ENCODE measurements at regions of chr2 and their contacts with region 1.

Region 1: DNA sequence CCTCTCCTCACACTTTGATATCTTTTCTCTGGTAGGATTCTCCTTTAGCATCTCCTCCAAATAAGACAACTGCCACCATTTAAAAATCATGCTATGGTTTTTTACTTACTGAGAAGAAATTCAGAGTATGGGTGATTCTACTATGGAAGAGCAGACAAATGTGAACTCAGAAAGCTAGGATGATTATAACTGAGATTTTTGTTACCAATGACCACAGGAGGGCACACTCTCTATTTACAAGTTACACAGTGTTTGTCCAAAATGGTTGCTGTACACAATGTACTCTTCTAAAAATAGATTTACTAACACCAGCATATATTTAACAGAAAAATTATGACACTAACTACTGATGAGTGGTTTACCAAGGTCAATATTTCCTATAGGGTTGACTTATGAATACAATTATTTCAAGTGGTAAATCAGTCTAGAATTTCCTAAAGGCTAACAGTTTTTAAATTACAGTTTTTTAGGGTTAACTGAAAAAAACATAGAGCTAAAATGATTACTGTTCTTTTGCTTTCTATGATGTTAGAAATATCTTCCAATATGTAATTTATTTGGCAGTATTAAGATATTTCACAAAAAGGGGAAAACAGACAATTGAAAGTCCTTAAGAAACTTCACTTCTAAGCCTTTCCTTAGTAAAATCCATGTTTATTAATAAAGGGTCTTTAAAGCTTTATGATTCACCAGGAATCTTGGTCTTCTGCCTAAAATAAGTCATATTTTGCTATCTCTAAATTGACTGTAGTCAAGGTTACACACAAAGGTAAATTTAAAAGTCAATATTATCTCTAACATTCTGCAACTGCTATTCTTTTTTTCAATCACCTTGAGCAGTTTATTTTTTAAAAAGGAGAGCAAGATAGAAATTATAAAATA is 57.2 kb downstream of the MAP4K3 start:
- DNase-seq: peak; percentile 62
- H3K4me3 Mint-ChIP-seq: no peak overlapping the region
- H3K27ac Mint-ChIP-seq: peak overlapping the region; percentile 82
- H3K4me1 Mint-ChIP-seq: peaks cover 25% of the 10 kb centered on the region
- H3K27me3 Mint-ChIP-seq: no peaks in the 10 kb centered on the region
- CTCF ChIP-seq: peak; percentile 48

Region 2: DNA sequence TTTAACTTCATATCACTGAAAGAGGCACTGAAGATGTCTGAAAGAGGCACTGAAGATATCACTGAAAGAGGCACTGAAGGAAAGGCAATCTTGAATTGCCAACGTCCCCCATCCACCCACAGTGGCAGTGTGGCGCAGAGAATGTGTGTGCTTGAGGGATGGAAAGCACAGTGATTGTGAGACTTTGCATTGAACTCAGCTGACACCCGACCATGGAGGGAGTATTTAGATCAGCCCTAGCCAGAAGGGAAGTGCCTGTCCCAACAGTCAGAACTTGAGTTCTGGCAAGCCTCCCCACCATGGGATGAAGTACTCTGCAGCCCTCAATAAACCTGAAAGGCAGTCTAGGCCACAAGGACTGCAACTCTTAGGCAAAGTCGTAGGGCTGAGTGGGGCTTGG is 23.4 kb after region 1 on chr2:
- CTCF ChIA-PET with region 1: interaction called, 5 read pairs
- POLR2A ChIA-PET with region 1: interaction called, 10 read pairs
- intact Hi-C with region 1: no loop called
- DNase-seq: no peak
- H3K4me3 Mint-ChIP-seq: no peak overlapping the region
- H3K27ac Mint-ChIP-seq: peak overlapping the region; percentile 86
- H3K4me1 Mint-ChIP-seq: peaks cover 41% of the 10 kb centered on the region
- H3K27me3 Mint-ChIP-seq: no peaks in the 10 kb centered on the region
- CTCF ChIP-seq: no peak

Region 3: DNA sequence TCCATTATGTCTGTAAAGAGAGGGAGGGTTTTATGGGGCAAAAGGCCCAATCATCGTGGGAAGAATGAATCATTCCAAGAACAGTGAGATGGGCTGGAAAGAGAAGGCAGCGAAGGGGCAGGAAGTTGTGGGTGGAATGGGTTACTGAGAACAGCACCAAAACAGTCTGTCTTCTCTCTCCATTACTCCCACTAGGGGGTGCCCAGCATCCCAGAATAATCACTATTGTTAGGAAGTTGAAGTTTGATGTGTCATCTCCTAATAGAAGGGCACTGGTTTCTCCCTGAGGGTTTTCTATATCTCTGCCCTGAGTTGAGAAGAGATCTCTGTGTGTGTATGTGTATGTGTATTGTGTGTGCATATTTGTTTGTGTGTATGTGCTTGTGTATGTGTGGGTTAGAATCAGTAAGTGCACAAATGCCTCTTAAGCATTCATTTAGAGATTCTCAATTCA is 133.8 kb after region 1 on chr2:
- CTCF ChIA-PET with region 1: interaction called, 7 read pairs
- POLR2A ChIA-PET with region 1: interaction called, 3 read pairs
- intact Hi-C with region 1: loop called (anchors 1 kb)
- DNase-seq: peak; percentile 92
- H3K4me3 Mint-ChIP-seq: no peak overlapping the region
- H3K27ac Mint-ChIP-seq: peak overlapping the region; percentile 90
- H3K4me1 Mint-ChIP-seq: peaks cover 30% of the 10 kb centered on the region
- H3K27me3 Mint-ChIP-seq: no peaks in the 10 kb centered on the region
- CTCF ChIP-seq: peak; percentile 55

Region 4: GRCh38 chr2:39523308-39524044 is 143.6 kb after region 1 on chr2:
- CTCF ChIA-PET with region 1: interaction called, 8 read pairs
- POLR2A ChIA-PET with region 1: interaction called, 14 read pairs
- intact Hi-C with region 1: no loop called
- DNase-seq: peak; percentile 82
- H3K4me3 Mint-ChIP-seq: peak overlapping the region; percentile 59
- H3K27ac Mint-ChIP-seq: peak overlapping the region; percentile 96
- H3K4me1 Mint-ChIP-seq: peaks cover 49% of the 10 kb centered on the region
- H3K27me3 Mint-ChIP-seq: no peaks in the 10 kb centered on the region
- CTCF ChIP-seq: no peak

Region 5: GRCh38 chr2:39696838-39697237 is 317.0 kb after region 1 on chr2:
- CTCF ChIA-PET with region 1: interaction called, 30 read pairs
- POLR2A ChIA-PET with region 1: interaction called, 8 read pairs
- intact Hi-C with region 1: loop called (anchors 1 kb)
- DNase-seq: peak; percentile 25
- H3K4me3 Mint-ChIP-seq: no peak overlapping the region
- H3K27ac Mint-ChIP-seq: no peak overlapping the region
- H3K4me1 Mint-ChIP-seq: peaks cover 14% of the 10 kb centered on the region
- H3K27me3 Mint-ChIP-seq: no peaks in the 10 kb centered on the region
- CTCF ChIP-seq: peak; percentile 45

Region 6: DNA sequence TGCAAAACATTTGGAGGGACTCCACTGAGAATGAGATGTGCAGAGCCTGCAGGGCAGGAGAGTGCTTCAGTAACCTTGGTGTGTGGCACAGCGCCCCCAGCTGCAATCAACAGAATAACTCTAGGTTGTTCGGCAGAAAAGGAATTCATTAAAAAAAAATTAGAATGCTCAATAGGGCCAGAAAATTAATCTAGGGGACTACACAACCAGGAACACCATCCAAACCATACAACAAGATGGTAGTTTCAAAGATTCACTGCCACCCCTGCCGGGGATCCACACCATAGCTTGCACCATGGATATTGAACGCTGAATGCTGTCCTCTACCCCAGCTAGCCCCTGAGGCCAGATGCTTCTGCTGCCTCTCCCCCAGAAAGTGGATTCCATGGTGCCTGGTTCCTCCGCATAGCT is 349.1 kb after region 1 on chr2:
- CTCF ChIA-PET with region 1: interaction called, 9 read pairs
- POLR2A ChIA-PET with region 1: no interaction called
- intact Hi-C with region 1: loop called (anchors 1 kb)
- DNase-seq: peak; percentile 43
- H3K4me3 Mint-ChIP-seq: no peak overlapping the region
- H3K27ac Mint-ChIP-seq: no peak overlapping the region
- H3K4me1 Mint-ChIP-seq: peaks cover 3% of the 10 kb centered on the region
- H3K27me3 Mint-ChIP-seq: no peaks in the 10 kb centered on the region
- CTCF ChIP-seq: peak; percentile 69

Measured in MCF 10A (cell line).